Activated CD4-positive, alpha-beta T cell treated with anti-CD3 and anti-CD28 coated beads, Interleukin-2, amount 10 ng/mL, durations not matched to agents 7 days and 5 days (primary cell): ENCODE measurements at regions of chr7 and their contacts with region 1.

Region 1: GRCh38 chr7:101217388-101218235 is at the starts of genes PLOD3 and ZNHIT1:
- DNase-seq: peak; percentile 98
- H3K4me3 Mint-ChIP-seq: peak within 1 kb of the TSS; percentile 95
- H3K27ac Mint-ChIP-seq: peak within 1 kb of the TSS; percentile 82
- H3K4me1 Mint-ChIP-seq: peaks cover 36% of the 10 kb centered on the region
- H3K27me3 Mint-ChIP-seq: no peaks in the 10 kb centered on the region
- total RNA-seq, gene PLOD3: 59.7 to 69.5 TPM
- total RNA-seq, gene ZNHIT1: 61.6 to 67.4 TPM

Region 2: DNA sequence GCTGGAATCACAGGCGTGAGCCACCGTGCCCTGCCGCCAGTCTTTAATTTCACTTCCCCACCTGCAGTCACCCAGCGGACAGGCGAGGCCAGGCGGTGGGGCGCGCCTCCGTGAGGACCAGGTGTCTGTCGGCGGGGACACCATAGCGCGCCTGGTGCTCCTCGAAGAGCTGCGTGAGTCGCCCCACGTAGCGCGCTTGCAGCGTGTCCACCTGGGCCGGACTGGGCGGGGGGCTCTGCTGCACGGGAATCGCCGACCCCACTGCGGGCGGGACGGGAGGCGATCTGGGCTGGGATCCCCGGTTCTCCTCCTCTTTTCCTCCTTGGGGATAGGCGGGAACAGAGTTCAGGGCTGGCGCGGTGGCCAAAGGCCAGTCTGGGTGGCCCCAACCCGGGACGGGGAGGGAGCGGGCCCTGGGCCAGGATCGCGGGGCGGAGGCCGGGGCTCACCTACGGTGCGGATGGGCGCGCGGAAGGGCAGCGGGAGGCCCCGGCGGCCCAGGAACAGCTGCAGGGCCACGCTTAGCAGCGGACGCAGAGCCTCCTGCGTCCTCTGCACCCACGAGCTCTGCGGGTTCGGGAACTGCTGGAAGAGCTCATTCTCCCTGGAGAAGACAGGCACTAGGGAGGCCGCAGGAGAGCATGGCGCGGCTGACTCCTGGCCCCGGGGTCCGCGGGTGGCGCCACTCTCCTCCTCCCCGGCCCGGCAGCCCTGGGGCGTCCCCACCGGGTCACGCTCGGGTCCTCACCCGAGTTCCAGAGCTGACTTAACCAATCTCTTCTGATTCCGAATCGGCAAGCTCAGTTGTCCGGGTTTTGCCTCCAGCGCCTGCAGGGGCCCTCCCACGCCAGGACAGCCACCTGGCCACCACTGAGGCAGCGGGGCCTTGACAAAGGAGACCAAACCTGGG is 15.7 kb before region 1 on chr7:
- CTCF ChIA-PET with region 1: interaction called, 16 read pairs
- POLR2A ChIA-PET with region 1: no interaction called
- DNase-seq: no peak
- H3K4me3 Mint-ChIP-seq: no peak overlapping the region
- H3K27ac Mint-ChIP-seq: no peak overlapping the region
- H3K4me1 Mint-ChIP-seq: peaks cover 11% of the 10 kb centered on the region
- H3K27me3 Mint-ChIP-seq: peaks cover 34% of the 10 kb centered on the region

Region 3: DNA sequence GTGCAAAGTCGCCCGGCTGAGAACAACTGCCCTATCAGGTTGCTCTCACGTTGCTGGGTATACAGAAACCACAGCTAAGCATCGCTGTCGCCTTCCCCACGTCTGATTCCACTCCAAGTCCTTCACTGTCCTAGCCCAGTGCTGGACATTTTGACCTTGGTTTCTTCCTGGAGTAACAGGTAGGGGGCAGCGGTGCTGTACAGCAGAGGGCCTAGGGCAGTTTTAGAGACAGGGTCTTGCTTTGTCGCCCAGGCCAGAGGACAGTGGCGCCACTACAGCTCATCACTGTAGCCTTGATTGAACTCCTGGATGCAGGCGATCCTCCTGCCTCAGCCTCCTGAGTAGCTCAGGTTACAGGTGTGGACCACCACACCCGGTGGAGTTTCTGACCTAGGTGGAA is 17.4 kb after region 1 on chr7:
- CTCF ChIA-PET with region 1: interaction called, 10 read pairs
- POLR2A ChIA-PET with region 1: no interaction called
- DNase-seq: no peak
- H3K4me3 Mint-ChIP-seq: no peak overlapping the region
- H3K27ac Mint-ChIP-seq: no peak overlapping the region
- H3K4me1 Mint-ChIP-seq: peaks cover 9% of the 10 kb centered on the region
- H3K27me3 Mint-ChIP-seq: no peaks in the 10 kb centered on the region

Region 4: DNA sequence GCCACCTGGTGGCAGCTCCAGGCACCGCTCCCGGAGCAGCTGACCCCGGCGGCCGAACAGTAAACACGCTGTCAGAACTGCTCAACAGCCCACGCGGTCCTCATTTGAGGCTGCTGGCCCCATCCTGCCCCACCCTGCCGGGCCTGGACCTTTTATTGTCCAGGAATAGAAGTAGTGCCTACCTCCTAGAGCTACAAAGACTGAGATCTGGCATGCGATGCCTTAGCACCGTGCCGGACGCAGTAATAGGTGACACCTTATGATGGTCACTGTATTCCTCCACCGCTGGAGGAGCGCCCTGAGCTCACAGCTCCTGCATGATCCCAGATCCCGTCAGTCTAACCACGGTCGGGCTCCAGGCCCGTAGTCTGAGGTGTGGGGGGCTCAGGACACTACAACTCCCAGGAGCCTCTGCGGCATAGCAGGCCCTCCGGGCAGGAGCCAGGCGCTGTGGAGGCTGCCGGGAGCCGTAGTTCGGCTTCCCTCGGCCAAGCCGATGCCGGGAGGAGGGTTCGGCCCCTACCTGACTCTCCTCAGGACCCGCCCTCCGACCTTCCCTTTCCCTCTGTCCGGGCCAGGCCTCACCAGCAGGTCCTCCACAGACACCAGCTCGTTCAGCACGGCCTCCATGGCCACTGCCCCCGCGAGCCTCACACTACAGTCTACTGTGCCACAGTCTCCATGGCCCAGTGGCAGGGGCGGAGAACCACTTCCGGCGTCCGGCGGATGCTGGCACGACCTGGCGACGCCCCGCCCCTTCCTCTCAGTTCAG is 26.9 kb after region 1 on chr7 and contains the start of gene FIS1:
- CTCF ChIA-PET with region 1: interaction called, 58 read pairs
- POLR2A ChIA-PET with region 1: interaction called, 11 read pairs
- DNase-seq: peak; percentile 94
- H3K4me3 Mint-ChIP-seq: peak within 1 kb of the TSS; percentile 88
- H3K27ac Mint-ChIP-seq: peak within 1 kb of the TSS; percentile 97
- H3K4me1 Mint-ChIP-seq: peaks cover 40% of the 10 kb centered on the region
- H3K27me3 Mint-ChIP-seq: no peaks in the 10 kb centered on the region
- total RNA-seq, gene FIS1: 87.3 to 103 TPM